ENCODE measurements at regions of chr13 and their contacts with region 1.

Region 1: DNA sequence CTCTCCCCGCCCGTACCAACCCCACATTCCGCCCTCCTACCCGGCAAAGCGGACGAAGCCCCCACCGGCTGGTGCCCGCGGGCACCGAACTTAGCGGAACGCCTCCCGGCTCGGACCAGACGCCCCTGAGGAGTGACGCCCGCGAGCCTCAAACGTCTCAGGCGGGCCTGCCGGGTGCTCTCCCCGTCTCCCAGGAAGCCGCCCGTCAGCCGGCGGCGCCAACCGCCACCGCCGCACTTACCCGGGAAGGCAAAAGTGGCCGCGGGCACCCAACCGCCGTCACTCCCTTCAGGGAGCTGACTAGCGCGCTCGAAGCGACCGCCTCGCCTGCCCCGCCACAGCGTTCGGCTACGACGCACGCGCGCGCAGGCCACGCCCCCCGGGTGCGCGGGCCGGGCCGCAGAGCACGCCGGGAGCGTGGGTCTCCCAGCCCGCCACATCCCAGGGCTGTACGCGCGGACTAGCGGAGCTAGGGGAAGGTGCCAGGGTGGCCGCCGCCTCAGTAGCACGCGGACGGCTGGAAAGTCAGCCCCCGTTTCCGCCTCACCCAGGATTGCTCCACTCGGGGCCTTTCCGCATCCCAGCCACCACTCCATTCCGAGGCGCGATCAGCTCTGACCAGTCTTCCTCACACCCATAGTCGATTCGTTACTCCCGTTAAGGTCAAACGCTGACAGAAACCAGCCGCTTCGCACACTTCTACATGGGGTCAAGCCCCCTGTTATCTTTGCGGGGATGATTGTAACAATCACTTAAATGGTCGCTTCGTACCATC is at the start of gene TEX30:
- DNase-seq: peak; percentile 90
- H3K4me3 ChIP-seq: peak within 1 kb of the TSS; percentile 85 to 94 (median 88)
- H3K27ac ChIP-seq: peak within 1 kb of the TSS; percentile 76
- H3K4me1 ChIP-seq: peaks cover 18% of the 10 kb centered on the region
- H3K27me3 ChIP-seq: no peaks in the 10 kb centered on the region
- CTCF ChIP-seq: peak in 1 of 2 donors; percentile 10
- POLR2A ChIP-seq: peak; percentile 97
- total RNA-seq, gene TEX30: 14.5 and 19.8 TPM in 2 replicates

Region 2: DNA sequence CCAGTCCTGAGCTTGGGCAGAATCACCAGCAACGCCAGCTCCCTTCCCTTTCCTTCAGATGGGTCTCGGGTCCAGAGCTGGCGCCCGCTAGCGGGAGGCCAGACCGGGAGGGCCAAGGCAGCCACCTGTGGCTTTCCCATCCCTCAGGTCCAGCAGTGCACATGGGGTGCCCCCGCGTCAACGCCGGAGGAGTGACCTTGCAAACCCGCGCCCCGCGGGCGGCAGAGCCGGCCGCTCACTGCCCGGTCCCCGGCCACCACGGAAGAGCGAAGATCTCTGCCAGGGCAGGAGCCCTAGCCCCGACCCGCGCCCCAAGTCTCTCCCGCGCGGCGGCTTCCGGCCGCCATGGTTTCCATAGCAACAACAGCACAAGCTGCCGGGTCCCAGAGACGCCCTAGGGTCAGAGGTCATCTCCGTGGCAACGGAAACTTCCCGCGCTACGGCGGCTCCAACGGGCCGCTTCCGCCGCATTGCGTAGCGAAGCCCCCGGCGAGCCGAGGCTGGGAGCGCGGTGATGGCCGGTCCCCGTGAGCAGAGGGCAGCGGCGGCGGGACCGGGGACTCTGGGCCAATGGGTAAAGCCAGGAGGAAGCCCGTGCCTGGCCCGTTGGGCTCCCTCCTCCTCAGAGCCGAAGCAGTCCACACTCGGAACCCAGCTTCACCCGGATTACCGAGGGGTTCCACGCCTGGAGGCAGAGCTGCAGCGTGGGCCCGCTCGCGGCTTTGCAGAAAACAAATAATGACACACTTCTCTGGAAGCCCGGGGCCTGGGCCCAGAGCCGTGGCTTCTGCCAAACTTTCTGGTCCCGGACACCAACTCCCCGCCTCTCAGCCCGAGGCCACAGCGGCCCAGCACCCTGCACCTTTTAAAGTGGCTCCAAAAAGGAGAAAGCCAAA is 379.2 kb before region 1 on chr13:
- CTCF ChIA-PET with region 1: no interaction called
- POLR2A ChIA-PET with region 1: no interaction called
- dilution Hi-C with region 1: no loop called
- intact Hi-C with region 1: loop called (anchors 2 kb)
- DNase-seq: peak; percentile 75
- H3K4me3 ChIP-seq: peak overlapping the region; percentile 60 to 68 (median 65)
- H3K27ac ChIP-seq: no peak overlapping the region
- H3K4me1 ChIP-seq: peaks cover 9% of the 10 kb centered on the region
- H3K27me3 ChIP-seq: peaks cover 11 to 26% of the 10 kb centered on the region in 2 experiments
- CTCF ChIP-seq: peak in 1 of 2 donors; percentile 30
- POLR2A ChIP-seq: no peak

Region 3: GRCh38 chr13:102651892-102652291 is 121.7 kb before region 1 on chr13:
- CTCF ChIA-PET with region 1: interaction called, 4 read pairs
- POLR2A ChIA-PET with region 1: no interaction called
- dilution Hi-C with region 1: no loop called
- intact Hi-C with region 1: loop called (anchors 1 kb)
- DNase-seq: no peak
- H3K4me3 ChIP-seq: no peak overlapping the region
- H3K27ac ChIP-seq: no peak overlapping the region
- H3K4me1 ChIP-seq: peaks cover 21% of the 10 kb centered on the region
- H3K27me3 ChIP-seq: no peaks in the 10 kb centered on the region
- CTCF ChIP-seq: no peak
- POLR2A ChIP-seq: no peak

Region 4: DNA sequence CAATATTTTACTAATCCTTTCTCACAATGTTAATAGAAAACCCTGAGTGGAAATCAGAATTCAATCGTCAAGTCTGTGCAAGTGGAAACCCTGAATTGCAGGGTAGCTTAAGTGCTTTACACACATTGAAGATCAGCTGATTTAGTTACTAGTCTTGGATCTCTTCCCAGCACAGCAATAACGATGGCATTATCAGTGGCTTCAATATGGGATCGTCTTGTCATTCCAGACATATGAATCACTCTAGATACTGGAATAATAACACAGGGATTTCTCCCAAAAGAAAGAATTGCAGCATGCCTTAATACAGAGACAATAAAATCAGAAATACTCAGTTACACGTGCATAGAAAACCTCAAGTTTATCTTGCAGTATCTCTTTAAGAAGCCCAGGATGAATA is 66.2 kb before region 1 on chr13:
- CTCF ChIA-PET with region 1: interaction called, 3 read pairs
- POLR2A ChIA-PET with region 1: interaction called, 3 read pairs
- dilution Hi-C with region 1: no loop called
- intact Hi-C with region 1: loop called (anchors 1 kb)
- DNase-seq: peak; percentile 93
- H3K4me3 ChIP-seq: no peak overlapping the region
- H3K27ac ChIP-seq: peak overlapping the region; percentile 59
- H3K4me1 ChIP-seq: peaks cover 48% of the 10 kb centered on the region
- H3K27me3 ChIP-seq: no peaks in the 10 kb centered on the region
- CTCF ChIP-seq: no peak
- POLR2A ChIP-seq: no peak

Region 5: DNA sequence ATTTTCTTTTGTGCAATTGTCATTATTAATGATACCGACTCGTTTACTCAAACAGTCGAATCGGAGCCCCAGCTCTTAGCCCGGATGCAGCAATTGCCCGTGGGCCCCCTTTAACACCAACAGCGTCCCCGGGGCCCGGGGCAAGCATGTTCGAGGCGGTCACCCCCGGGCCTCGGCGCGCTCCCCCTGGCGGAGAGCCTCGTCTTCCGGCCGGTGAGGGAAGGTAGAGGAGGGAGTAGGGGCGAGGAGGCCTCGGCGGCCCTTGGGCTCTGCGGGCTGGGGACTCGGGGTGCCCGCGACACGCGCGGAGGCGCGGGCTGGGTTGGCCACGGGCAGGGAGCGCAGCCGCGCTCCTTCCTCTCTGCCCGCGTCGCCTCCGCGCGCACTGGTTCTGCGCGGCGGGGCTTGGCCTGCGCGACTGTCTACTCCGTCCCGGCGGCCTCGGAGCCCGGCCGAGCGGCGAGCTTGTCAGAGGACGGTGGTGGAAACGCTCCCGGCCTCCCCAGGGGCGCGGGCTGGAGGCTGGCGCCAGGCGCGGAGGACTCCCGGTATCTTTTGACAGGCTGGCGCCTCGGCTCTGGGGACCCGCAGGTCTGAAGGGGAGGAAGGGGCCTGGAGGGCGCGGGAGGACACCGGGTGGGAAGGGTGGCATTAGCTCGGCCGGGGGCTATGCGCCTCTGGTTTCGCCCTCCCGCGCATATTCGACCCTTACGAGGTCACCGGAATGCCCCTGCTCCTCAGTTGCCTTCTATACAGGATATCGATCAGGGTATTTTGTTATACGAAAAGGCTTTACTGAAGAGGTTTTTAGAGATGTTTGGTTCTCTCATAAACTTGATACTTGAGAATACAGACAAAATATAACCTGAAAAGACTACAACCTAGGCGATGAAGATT is 26.8 kb after region 1 on chr13:
- CTCF ChIA-PET with region 1: interaction called, 7 read pairs
- POLR2A ChIA-PET with region 1: interaction called, 3 read pairs
- dilution Hi-C with region 1: no loop called
- intact Hi-C with region 1: loop called (anchors 1 kb)
- DNase-seq: peak; percentile 79
- H3K4me3 ChIP-seq: peak overlapping the region; percentile 47 to 71 (median 56)
- H3K27ac ChIP-seq: peak overlapping the region; percentile 41
- H3K4me1 ChIP-seq: peaks cover 18% of the 10 kb centered on the region
- H3K27me3 ChIP-seq: no peaks in the 10 kb centered on the region
- CTCF ChIP-seq: peak; percentile 76 to 85
- POLR2A ChIP-seq: no peak

Measured in endothelial cell of umbilical vein (primary cell).